ENCODE measurements at regions of chr9 and their contacts with region 1.

Region 1: DNA sequence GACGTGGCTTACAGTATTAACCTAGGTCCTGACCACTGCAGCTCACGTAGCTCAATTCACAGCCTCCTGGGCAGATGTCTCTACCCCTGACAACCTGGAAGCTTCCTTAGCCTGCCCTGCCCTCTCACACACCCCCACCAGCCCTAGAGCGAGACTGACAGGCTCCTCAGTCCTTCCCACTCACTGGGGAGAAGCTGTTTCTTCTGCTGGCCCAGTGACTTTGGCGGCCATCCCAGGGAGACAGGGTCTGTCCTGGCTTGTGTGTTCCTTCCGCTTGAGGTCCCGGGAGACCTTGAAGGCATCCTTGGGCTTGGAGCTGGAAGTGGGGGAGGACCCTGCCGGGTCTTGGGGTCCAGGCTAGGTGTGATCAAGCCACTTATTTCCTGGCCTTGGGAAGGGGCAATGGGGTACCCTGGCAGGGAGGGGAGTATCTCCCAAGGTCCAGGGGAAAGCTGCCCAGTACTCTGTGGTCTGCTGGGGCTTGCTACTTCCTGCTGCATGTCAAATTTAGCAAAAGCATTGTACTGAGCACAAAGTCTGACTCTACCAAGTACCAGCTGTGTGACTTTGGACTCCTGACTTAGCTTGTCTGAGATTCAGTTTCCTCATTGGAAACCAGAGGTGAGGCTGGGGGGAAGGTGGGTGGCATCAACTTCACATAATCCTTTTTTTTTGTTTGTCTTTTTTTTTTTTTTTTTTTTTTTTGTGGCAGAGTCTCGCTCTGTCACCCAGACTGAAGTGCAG is 1.9 kb downstream of the MIGA2 start:
- DNase-seq: no peak
- H3K4me3 ChIP-seq: no peak overlapping the region
- H3K4me3 Mint-ChIP-seq: peak overlapping the region; percentile 95 to 100 (median 97)
- H3K27ac ChIP-seq: peak overlapping the region; percentile 74
- H3K27ac Mint-ChIP-seq: peak overlapping the region in 7 of 8 donors; percentile 21 to 68 (median 44)
- H3K4me1 ChIP-seq: peaks cover 30% of the 10 kb centered on the region
- H3K4me1 Mint-ChIP-seq: peaks cover 36 to 48% (median 38%) of the 10 kb centered on the region in 3 donors
- H3K27me3 ChIP-seq: no peaks in the 10 kb centered on the region
- H3K27me3 Mint-ChIP-seq: no peaks in the 10 kb centered on the region

Region 2: DNA sequence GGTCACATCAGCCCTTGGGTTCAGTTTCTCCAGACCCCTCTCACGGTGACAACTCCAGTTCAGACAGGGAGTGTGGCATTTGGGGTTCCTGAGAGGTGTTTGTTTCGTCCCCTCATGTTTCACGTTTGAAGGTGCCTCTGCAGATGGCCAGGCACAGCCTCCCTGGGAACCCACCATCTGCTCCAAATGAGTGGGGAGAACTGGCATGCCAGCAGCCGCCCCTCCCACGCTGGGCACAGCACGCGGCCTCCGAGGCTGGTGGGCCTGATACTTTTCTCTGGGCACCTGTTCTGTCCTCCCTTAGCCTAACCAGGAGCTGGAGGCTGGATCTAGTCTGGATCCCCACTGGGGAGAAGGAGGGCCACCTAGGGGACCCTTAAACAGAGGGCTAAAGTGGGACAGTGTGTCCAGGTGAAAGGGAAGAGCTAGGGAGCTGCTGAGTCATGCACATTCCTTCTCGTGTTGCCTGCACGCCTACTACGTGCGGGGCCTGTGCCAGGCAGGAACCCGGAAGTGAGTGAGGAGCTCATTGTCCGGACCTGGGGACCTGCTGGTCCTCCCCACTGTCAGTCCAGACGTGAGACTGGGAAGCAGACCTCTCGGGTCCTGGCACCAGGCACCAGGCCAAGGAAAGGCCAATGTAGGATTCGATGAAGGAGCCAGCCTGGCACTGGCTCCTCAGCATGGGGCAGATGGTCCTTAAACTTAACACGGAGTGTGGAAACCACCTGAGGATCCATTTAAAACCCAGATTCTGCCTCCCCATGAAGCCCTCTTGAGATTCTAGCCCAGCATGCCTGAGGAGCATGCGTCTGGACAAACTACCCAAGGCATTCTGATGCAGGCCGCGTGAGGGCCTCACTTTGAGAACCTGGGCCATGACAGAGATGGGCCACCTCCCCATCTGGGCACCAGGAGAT is 823.5 kb before region 1 on chr9:
- CTCF ChIA-PET with region 1: no interaction called
- POLR2A ChIA-PET with region 1: interaction called, 19 read pairs
- DNase-seq: no peak
- H3K4me3 ChIP-seq: no peak overlapping the region
- H3K4me3 Mint-ChIP-seq: no peak overlapping the region
- H3K27ac ChIP-seq: no peak overlapping the region
- H3K27ac Mint-ChIP-seq: no peak overlapping the region
- H3K4me1 ChIP-seq: peaks cover 13% of the 10 kb centered on the region
- H3K4me1 Mint-ChIP-seq: peaks cover 11 to 15% (median 12%) of the 10 kb centered on the region in 3 donors
- H3K27me3 ChIP-seq: no peaks in the 10 kb centered on the region
- H3K27me3 Mint-ChIP-seq: peaks cover 5 to 8% of the 10 kb centered on the region in 2 donors

Region 3: DNA sequence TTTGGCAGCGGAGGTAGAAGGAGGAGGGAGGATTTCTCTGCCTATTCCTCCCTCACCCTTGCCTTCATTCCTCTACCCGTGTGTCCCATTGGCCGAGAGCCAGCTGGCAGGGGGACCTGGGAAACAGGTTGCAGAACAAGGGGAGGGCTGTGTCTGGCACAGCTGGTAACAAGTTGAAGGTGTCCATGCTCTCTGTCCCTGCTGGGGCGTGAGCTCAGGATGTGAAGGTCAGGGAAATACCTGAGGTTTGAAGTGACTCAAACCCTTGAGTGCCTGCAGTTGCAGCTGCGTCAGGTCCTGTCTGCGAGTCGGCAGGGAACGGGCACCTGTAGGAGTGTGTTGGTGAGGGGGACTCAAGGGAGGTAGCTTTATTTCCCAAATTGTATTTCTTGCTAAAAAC is 14.3 kb after region 1 on chr9:
- CTCF ChIA-PET with region 1: no interaction called
- POLR2A ChIA-PET with region 1: no interaction called
- DNase-seq: no peak
- H3K4me3 ChIP-seq: no peak overlapping the region
- H3K4me3 Mint-ChIP-seq: no peak overlapping the region
- H3K27ac ChIP-seq: no peak overlapping the region
- H3K27ac Mint-ChIP-seq: peak overlapping the region in 1 of 8 donors; percentile 36
- H3K4me1 ChIP-seq: no peaks in the 10 kb centered on the region
- H3K4me1 Mint-ChIP-seq: no peaks in the 10 kb centered on the region
- H3K27me3 ChIP-seq: no peaks in the 10 kb centered on the region
- H3K27me3 Mint-ChIP-seq: no peaks in the 10 kb centered on the region

Region 4: DNA sequence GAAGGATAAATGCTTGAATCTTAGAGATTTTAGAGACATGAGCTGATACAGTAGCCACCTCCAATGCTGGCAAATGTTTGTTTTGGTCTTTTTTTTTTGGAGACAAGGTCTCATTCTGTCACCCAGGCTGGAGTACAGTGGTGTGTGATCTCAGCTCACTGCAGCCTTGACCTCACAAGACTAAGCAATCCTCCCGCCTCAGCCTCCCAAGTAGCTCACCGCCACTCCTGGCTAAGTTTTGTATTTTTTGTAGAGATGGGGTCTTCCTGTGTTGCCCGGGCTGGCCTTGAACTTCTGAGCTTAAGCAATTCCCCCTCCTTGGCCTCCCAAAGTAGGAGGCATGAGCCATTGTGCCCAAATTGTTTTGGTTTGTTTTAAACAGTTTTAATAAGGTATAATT is 35.8 kb after region 1 on chr9:
- CTCF ChIA-PET with region 1: no interaction called
- POLR2A ChIA-PET with region 1: no interaction called
- DNase-seq: no peak
- H3K4me3 ChIP-seq: no peak overlapping the region
- H3K4me3 Mint-ChIP-seq: peak overlapping the region in 2 of 7 donors; percentile 43 to 63
- H3K27ac ChIP-seq: no peak overlapping the region
- H3K27ac Mint-ChIP-seq: peak overlapping the region in 6 of 8 donors; percentile 33 to 94 (median 75)
- H3K4me1 ChIP-seq: peaks cover 29% of the 10 kb centered on the region
- H3K4me1 Mint-ChIP-seq: peaks cover 17 to 44% (median 26%) of the 10 kb centered on the region in 3 donors
- H3K27me3 ChIP-seq: no peaks in the 10 kb centered on the region
- H3K27me3 Mint-ChIP-seq: peaks cover 0 to 1% of the 10 kb centered on the region in 2 donors

Region 5: GRCh38 chr9:129145822-129146292 is 107.6 kb after region 1 on chr9:
- CTCF ChIA-PET with region 1: no interaction called
- POLR2A ChIA-PET with region 1: no interaction called
- DNase-seq: no peak
- H3K4me3 ChIP-seq: no peak overlapping the region
- H3K4me3 Mint-ChIP-seq: peak overlapping the region in 1 of 7 donors; percentile 63
- H3K27ac ChIP-seq: no peak overlapping the region
- H3K27ac Mint-ChIP-seq: no peak overlapping the region
- H3K4me1 ChIP-seq: peaks cover 24% of the 10 kb centered on the region
- H3K4me1 Mint-ChIP-seq: peaks cover 13 to 29% (median 16%) of the 10 kb centered on the region in 3 donors
- H3K27me3 ChIP-seq: no peaks in the 10 kb centered on the region
- H3K27me3 Mint-ChIP-seq: peaks cover 0 to 1% of the 10 kb centered on the region in 2 donors

Region 6: GRCh38 chr9:130243015-130243734 is 1204.9 kb after region 1 on chr9:
- CTCF ChIA-PET with region 1: no interaction called
- POLR2A ChIA-PET with region 1: no interaction called
- DNase-seq: peak; percentile 60 to 84 (median 74)
- H3K4me3 ChIP-seq: peak overlapping the region; percentile 12
- H3K4me3 Mint-ChIP-seq: peak overlapping the region in 6 of 7 donors; percentile 61 to 82 (median 78)
- H3K27ac ChIP-seq: no peak overlapping the region
- H3K27ac Mint-ChIP-seq: peak overlapping the region in 7 of 8 donors; percentile 7 to 89 (median 78)
- H3K4me1 ChIP-seq: peaks cover 21% of the 10 kb centered on the region
- H3K4me1 Mint-ChIP-seq: peaks cover 13 to 26% (median 24%) of the 10 kb centered on the region in 3 donors
- H3K27me3 ChIP-seq: no peaks in the 10 kb centered on the region
- H3K27me3 Mint-ChIP-seq: peaks cover 0 to 1% of the 10 kb centered on the region in 2 donors

Measured in CD8-positive, alpha-beta memory T cell (primary cell).